GM12878 (cell line): ENCODE measurements at regions of chr2 and their contacts with region 1.

Region 1: GRCh38 chr2:48727565-48727964 is 28.0 kb downstream of the LHCGR start:
- DNase-seq: no peak
- ATAC-seq: 0 out of 3 replicates have a peak, but pooled peaks have one; percentile 23
- H3K4me3 ChIP-seq: no peak overlapping the region
- H3K27ac ChIP-seq: no peak overlapping the region
- H3K4me1 ChIP-seq: no peaks in the 10 kb centered on the region
- H3K27me3 ChIP-seq: no peaks in the 10 kb centered on the region; a peak in 1 of 4 replicates
- CTCF ChIP-seq: no peak; a peak in 1 of 6 replicates
- EP300 ChIP-seq: no peak
- POLR2A ChIP-seq: no peak
- RAD21 ChIP-seq: 0 out of 2 replicates have a peak, but pooled peaks have one; percentile 15

Region 2: GRCh38 chr2:48600204-48600813 is 127.3 kb before region 1 on chr2:
- CTCF ChIA-PET with region 1: interaction called, 4 read pairs
- POLR2A ChIA-PET with region 1: no interaction called
- RAD21 ChIA-PET with region 1: interaction called, 3 read pairs
- SMC1A ChIA-PET with region 1: no interaction called
- in situ Hi-C with region 1: no loop called
- intact Hi-C with region 1: loop called (anchors 1 kb)
- DNase-seq: no peak
- ATAC-seq: peak; percentile 77
- H3K4me3 ChIP-seq: no peak overlapping the region
- H3K27ac ChIP-seq: no peak overlapping the region
- H3K4me1 ChIP-seq: no peaks in the 10 kb centered on the region
- H3K27me3 ChIP-seq: peaks cover 0 to 2% of the 10 kb centered on the region in 2 experiments; a peak in 1 of 4 replicates
- CTCF ChIP-seq: peak; percentile 61 to 70 (median 68)
- EP300 ChIP-seq: no peak
- POLR2A ChIP-seq: no peak
- RAD21 ChIP-seq: peak; percentile 81

Region 3: DNA sequence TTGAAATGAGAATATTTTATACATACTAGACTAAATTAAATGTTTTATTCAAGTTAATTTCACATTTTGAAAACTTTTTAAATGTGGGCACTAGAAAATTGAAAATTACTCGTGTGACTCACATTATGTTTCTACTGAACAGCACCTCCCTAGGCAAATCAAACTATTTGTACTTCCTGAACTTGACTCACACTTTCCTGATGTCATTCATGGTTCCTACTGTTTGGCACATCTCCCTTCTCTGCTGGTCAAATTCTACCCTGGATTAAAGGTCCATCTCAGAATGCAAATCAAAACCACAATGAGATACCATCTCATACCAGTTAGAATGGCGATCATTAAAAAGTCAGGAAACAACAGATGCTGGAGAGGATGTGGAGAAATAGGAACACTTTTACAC is 11.2 kb after region 1 on chr2:
- CTCF ChIA-PET with region 1: no interaction called
- POLR2A ChIA-PET with region 1: no interaction called
- RAD21 ChIA-PET with region 1: no interaction called
- SMC1A ChIA-PET with region 1: no interaction called
- in situ Hi-C with region 1: no loop called
- intact Hi-C with region 1: no loop called
- DNase-seq: no peak
- ATAC-seq: no peak
- H3K4me3 ChIP-seq: no peak overlapping the region
- H3K27ac ChIP-seq: no peak overlapping the region
- H3K4me1 ChIP-seq: no peaks in the 10 kb centered on the region
- H3K27me3 ChIP-seq: no peaks in the 10 kb centered on the region
- CTCF ChIP-seq: no peak
- EP300 ChIP-seq: no peak
- POLR2A ChIP-seq: no peak
- RAD21 ChIP-seq: no peak